Ascending aorta (tissue), 2 donors: ENCODE measurements at regions of chr5 and their contacts with region 1.

Region 1: GRCh38 chr5:75053304-75054133 is 1.2 kb upstream of the GCNT4 start:
- DNase-seq: peak in 1 of 2 donors; percentile 74
- H3K4me3 ChIP-seq: peak overlapping the region; percentile 81 to 90
- H3K27ac ChIP-seq: peak overlapping the region; percentile 96 to 98
- H3K4me1 ChIP-seq: peaks cover 4 to 22% of the 10 kb centered on the region in 2 donors
- H3K27me3 ChIP-seq: no peaks in the 10 kb centered on the region
- CTCF ChIP-seq: peak in 2 of 3 experiments; percentile 3 to 31

Region 2: GRCh38 chr5:74684900-74685851 is 368.3 kb before region 1 on chr5 and contains the start of gene HEXB:
- intact Hi-C with region 1: loop called (anchors 10 kb)
- DNase-seq: peak; percentile 58 to 95
- H3K4me3 ChIP-seq: peak within 1 kb of the TSS; percentile 76 to 92
- H3K27ac ChIP-seq: peak within 1 kb of the TSS; percentile 90 to 91
- H3K4me1 ChIP-seq: peaks cover 0 to 11% of the 10 kb centered on the region in 2 donors
- H3K27me3 ChIP-seq: no peaks in the 10 kb centered on the region
- CTCF ChIP-seq: no peak
- total RNA-seq, gene HEXB: 124 TPM

Region 3: GRCh38 chr5:74766849-74767578 is 286.5 kb before region 1 on chr5 and contains the starts of genes GFM2 and NSA2:
- intact Hi-C with region 1: loop called (anchors 5 kb)
- DNase-seq: peak; percentile 50 to 94
- H3K4me3 ChIP-seq: peak within 1 kb of the TSS; percentile 88 to 96
- H3K27ac ChIP-seq: peak within 1 kb of the TSS; percentile 80 to 91
- H3K4me1 ChIP-seq: peaks cover 7 to 20% of the 10 kb centered on the region in 2 donors
- H3K27me3 ChIP-seq: no peaks in the 10 kb centered on the region
- CTCF ChIP-seq: no peak
- total RNA-seq, gene GFM2: 12.7 TPM
- total RNA-seq, gene NSA2: 103 TPM

Region 4: DNA sequence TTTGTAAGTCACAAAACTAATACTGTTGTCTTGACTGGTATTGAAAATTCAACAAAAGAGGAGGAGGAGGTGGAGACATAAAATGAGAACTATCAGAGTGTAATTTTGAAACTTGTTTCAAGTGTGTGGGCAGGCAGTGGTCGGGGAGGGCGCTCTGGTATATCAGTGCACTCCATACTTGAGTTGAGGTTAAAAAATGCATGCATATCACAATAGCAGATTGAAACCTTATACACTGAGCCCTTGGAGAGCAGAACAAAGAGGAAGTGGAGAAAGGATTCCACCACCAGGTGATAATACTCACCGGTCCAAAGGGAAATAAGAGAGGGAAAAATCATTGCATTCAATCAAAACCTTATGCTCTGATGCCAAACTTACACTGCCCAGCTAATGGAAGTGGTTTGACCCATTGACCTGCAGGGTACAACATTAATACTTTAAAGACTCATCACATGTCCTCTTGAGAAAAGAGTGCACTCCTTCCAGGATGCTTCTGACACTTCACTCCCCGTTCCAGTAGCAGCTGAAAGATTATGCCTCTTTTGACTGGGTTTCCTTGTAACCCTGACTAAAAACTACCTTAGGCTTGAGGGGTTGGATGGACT is 107.9 kb before region 1 on chr5:
- intact Hi-C with region 1: loop called (anchors 2 kb)
- DNase-seq: no peak
- H3K4me3 ChIP-seq: no peak overlapping the region
- H3K27ac ChIP-seq: no peak overlapping the region
- H3K4me1 ChIP-seq: peaks cover 0 to 3% of the 10 kb centered on the region in 2 donors
- H3K27me3 ChIP-seq: no peaks in the 10 kb centered on the region
- CTCF ChIP-seq: no peak

Region 5: GRCh38 chr5:75225506-75225905 is 172.0 kb after region 1 on chr5:
- intact Hi-C with region 1: no loop called
- DNase-seq: no peak
- H3K4me3 ChIP-seq: no peak overlapping the region
- H3K27ac ChIP-seq: no peak overlapping the region
- H3K4me1 ChIP-seq: no peaks in the 10 kb centered on the region
- H3K27me3 ChIP-seq: no peaks in the 10 kb centered on the region
- CTCF ChIP-seq: no peak

Region 6: DNA sequence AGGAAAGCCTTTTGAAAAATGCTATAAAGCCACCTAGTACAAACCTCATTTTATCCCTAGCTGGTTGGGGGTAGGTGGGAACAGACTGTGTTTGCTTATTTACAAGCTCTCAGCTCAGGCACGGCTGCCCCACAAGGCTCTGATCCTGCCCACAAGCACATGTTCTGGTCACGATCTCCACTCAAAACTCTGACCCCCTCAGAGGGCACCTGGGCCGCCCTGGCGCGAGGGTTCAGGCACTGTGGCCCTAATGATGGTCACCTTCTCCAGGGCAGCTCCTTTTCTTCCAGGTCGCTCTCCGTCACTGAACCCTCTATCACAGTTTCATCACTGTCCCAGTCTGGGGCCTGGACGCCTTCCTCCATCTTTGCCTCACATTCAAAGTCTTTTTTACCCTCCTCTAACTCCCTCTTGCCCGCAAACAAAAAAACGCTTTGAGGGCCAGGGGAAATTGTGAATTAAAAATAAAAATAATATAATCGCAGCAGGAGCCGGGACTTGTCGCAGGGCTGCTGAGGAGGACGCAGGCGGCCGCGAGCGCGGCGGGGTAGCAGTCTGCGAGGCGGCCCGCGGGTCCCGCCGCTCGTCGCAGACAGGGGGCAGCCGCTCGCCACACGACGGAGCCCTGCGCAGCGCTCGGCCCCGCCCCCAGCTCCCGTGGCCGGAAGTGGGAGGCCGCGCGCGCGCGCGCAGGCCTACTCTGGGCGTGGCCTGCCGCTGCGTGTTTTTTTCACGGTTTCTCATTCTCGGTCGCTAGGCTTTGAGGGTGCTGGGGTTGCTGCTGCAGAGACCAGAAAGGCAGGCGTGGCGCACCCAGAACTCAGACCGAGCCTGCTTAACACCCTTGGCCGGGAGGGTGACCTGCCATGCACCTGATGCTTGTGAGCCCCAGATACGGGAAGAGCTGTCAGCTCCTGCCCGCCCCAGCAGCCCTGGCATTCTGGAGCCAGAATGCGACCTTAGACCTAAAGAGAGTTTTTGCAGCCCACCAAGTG is 183.1 kb after region 1 on chr5 and contains the start of gene ANKRD31:
- intact Hi-C with region 1: loop called (anchors 2 kb)
- DNase-seq: peak; percentile 30 to 89
- H3K4me3 ChIP-seq: peak within 1 kb of the TSS; percentile 61 to 91
- H3K27ac ChIP-seq: peak within 1 kb of the TSS; percentile 75 to 76
- H3K4me1 ChIP-seq: no peaks in the 10 kb centered on the region
- H3K27me3 ChIP-seq: no peaks in the 10 kb centered on the region
- CTCF ChIP-seq: peak; percentile 59 to 92 (median 65)
- total RNA-seq, gene ANKRD31: not detected

Region 7: DNA sequence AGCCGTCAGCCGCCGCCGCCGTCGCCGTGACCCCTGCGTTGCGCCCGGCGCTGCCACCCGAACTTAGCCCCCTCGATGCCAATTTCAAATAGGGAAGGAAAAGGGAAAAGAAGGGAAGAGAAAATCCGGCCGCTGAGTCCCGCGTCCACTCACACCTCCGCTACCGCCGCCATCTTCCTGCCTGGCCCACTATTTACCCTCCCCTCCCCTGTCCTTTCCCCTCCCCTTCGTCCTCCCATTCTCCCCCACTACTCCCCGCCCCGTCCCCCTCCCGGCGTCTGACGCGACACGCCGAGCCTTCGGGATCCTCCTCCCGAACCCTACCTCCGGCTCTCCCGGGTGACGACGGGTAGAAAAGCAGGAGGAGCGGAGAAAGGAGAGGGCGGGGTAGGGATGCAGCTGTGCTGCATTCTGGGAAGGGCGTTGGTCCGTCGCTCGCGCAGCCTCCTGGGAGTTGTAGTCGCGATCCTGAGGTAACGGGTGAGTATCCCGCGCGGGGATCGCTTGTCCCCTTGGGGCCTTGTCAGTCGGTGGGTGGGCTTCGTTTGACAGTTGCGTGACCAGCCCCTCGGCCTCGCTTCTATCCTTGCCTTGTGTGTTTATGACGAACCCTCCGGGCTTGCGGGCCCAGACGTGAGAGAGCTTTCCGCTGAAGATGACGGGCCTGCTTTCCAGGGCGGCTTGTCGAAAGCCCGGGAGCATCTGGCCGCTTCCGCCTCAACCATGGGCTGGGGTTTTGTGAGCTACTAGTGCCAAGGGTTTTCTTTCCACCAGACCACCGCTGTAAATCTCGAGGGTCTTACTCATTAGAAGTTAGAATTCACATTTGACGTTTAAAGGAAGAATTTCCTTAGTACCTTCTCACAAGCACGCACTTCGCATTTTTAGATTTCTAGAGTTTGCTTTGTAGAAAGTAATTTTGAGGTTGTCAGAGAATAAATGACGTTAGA is 458.2 kb after region 1 on chr5 and contains the starts of genes CERT1 and POLK:
- intact Hi-C with region 1: loop called (anchors 10 kb)
- DNase-seq: peak; percentile 93 to 99
- H3K4me3 ChIP-seq: peak within 1 kb of the TSS; percentile 86 to 95
- H3K27ac ChIP-seq: peak within 1 kb of the TSS; percentile 93 to 95
- H3K4me1 ChIP-seq: peaks cover 6 to 24% of the 10 kb centered on the region in 2 donors
- H3K27me3 ChIP-seq: no peaks in the 10 kb centered on the region
- CTCF ChIP-seq: no peak
- total RNA-seq, gene CERT1: 29.8 TPM
- total RNA-seq, gene POLK: 19.4 TPM

Region 8: GRCh38 chr5:75717082-75717922 is 663.8 kb after region 1 on chr5 and contains the start of gene POC5:
- intact Hi-C with region 1: loop called (anchors 5 kb)
- DNase-seq: peak; percentile 87 to 98
- H3K4me3 ChIP-seq: peak within 1 kb of the TSS; percentile 64 to 77
- H3K27ac ChIP-seq: peak within 1 kb of the TSS; percentile 72 to 75
- H3K4me1 ChIP-seq: peaks cover 0 to 10% of the 10 kb centered on the region in 2 donors
- H3K27me3 ChIP-seq: no peaks in the 10 kb centered on the region
- CTCF ChIP-seq: no peak
- total RNA-seq, gene POC5: 5.3 TPM